ENCODE measurements at regions of chr19 and their contacts with region 1.

Region 1: GRCh38 chr19:50488389-50489194 is 11.9 kb upstream of the GARIN5A start:
- DNase-seq: no peak
- H3K4me3 ChIP-seq: no peak overlapping the region
- H3K27ac ChIP-seq: no peak overlapping the region
- H3K4me1 ChIP-seq: peaks cover 0 to 4% (median 0%) of the 10 kb centered on the region in 4 donors
- H3K27me3 ChIP-seq: peaks cover 20% of the 10 kb centered on the region
- CTCF ChIP-seq: no peak
- EP300 ChIP-seq: no peak
- POLR2A ChIP-seq: no peak

Region 2: GRCh38 chr19:50461066-50461875 is 27.3 kb before region 1 on chr19:
- in situ Hi-C with region 1: no loop called
- intact Hi-C with region 1: loop called (anchors 1 kb)
- DNase-seq: peak; percentile 73
- H3K4me3 ChIP-seq: no peak overlapping the region
- H3K27ac ChIP-seq: no peak overlapping the region
- H3K4me1 ChIP-seq: peaks cover 0 to under 1% (median 0%) of the 10 kb centered on the region in 4 donors
- H3K27me3 ChIP-seq: peaks cover 25% of the 10 kb centered on the region
- CTCF ChIP-seq: peak; percentile 77 to 92 (median 87)
- EP300 ChIP-seq: no peak
- POLR2A ChIP-seq: no peak

Measured in transverse colon (tissue), 4 donors.